ENCODE measurements at regions of chr2 and their contacts with region 1.

Region 1: DNA sequence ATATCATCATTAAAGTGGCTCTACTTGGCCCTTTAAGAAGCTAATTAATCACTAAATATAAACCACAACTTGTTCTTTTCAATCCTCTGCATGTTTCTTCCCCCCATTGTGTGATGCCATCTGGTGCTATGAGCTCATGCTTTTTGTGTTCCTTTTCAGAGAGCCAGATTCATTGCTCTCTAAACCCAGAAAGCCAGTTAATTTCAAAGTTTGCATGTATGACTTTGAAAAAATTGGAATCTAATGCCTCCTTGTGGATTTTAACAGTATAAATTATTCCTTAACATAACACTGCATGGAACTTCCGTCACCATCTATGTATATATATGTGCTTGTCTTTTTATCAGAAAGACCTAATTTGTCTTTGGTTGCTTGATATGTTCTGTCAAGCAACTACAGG is 31.1 kb downstream of the TMEM178A start:
- DNase-seq: peak; percentile 20
- H3K4me3 ChIP-seq: no peak overlapping the region
- H3K27me3 ChIP-seq: no peaks in the 10 kb centered on the region
- CTCF ChIP-seq: peak; percentile 8; the same call in 1 of the 2 replicates

Region 2: DNA sequence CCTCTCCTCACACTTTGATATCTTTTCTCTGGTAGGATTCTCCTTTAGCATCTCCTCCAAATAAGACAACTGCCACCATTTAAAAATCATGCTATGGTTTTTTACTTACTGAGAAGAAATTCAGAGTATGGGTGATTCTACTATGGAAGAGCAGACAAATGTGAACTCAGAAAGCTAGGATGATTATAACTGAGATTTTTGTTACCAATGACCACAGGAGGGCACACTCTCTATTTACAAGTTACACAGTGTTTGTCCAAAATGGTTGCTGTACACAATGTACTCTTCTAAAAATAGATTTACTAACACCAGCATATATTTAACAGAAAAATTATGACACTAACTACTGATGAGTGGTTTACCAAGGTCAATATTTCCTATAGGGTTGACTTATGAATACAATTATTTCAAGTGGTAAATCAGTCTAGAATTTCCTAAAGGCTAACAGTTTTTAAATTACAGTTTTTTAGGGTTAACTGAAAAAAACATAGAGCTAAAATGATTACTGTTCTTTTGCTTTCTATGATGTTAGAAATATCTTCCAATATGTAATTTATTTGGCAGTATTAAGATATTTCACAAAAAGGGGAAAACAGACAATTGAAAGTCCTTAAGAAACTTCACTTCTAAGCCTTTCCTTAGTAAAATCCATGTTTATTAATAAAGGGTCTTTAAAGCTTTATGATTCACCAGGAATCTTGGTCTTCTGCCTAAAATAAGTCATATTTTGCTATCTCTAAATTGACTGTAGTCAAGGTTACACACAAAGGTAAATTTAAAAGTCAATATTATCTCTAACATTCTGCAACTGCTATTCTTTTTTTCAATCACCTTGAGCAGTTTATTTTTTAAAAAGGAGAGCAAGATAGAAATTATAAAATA is 317.0 kb before region 1 on chr2:
- CTCF ChIA-PET with region 1: interaction called, 19 read pairs
- POLR2A ChIA-PET with region 1: no interaction called
- DNase-seq: peak; percentile 19
- H3K4me3 ChIP-seq: no peak overlapping the region
- H3K27me3 ChIP-seq: no peaks in the 10 kb centered on the region
- CTCF ChIP-seq: peak; percentile 52; the same call in 1 of the 2 replicates

Region 3: DNA sequence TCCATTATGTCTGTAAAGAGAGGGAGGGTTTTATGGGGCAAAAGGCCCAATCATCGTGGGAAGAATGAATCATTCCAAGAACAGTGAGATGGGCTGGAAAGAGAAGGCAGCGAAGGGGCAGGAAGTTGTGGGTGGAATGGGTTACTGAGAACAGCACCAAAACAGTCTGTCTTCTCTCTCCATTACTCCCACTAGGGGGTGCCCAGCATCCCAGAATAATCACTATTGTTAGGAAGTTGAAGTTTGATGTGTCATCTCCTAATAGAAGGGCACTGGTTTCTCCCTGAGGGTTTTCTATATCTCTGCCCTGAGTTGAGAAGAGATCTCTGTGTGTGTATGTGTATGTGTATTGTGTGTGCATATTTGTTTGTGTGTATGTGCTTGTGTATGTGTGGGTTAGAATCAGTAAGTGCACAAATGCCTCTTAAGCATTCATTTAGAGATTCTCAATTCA is 183.2 kb before region 1 on chr2:
- CTCF ChIA-PET with region 1: interaction called, 15 read pairs
- POLR2A ChIA-PET with region 1: no interaction called
- DNase-seq: peak; percentile 90
- H3K4me3 ChIP-seq: no peak overlapping the region
- H3K27me3 ChIP-seq: no peaks in the 10 kb centered on the region
- CTCF ChIP-seq: peak; percentile 78

Region 4: GRCh38 chr2:39593439-39594393 is 103.1 kb before region 1 on chr2:
- CTCF ChIA-PET with region 1: interaction called, 53 read pairs
- POLR2A ChIA-PET with region 1: no interaction called
- DNase-seq: peak; percentile 28
- H3K4me3 ChIP-seq: no peak overlapping the region
- H3K27me3 ChIP-seq: no peaks in the 10 kb centered on the region
- CTCF ChIP-seq: peak; percentile 83

Region 5: GRCh38 chr2:39719317-39719716 is 22.5 kb after region 1 on chr2:
- CTCF ChIA-PET with region 1: interaction called, 10 read pairs
- POLR2A ChIA-PET with region 1: no interaction called
- DNase-seq: no peak
- H3K4me3 ChIP-seq: no peak overlapping the region
- H3K27me3 ChIP-seq: no peaks in the 10 kb centered on the region
- CTCF ChIP-seq: no peak

Region 6: DNA sequence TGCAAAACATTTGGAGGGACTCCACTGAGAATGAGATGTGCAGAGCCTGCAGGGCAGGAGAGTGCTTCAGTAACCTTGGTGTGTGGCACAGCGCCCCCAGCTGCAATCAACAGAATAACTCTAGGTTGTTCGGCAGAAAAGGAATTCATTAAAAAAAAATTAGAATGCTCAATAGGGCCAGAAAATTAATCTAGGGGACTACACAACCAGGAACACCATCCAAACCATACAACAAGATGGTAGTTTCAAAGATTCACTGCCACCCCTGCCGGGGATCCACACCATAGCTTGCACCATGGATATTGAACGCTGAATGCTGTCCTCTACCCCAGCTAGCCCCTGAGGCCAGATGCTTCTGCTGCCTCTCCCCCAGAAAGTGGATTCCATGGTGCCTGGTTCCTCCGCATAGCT is 32.1 kb after region 1 on chr2:
- CTCF ChIA-PET with region 1: interaction called, 19 read pairs
- POLR2A ChIA-PET with region 1: no interaction called
- DNase-seq: no peak
- H3K4me3 ChIP-seq: no peak overlapping the region
- H3K27me3 ChIP-seq: no peaks in the 10 kb centered on the region
- CTCF ChIP-seq: peak; percentile 71